ENCODE measurements at regions of chr18 and their contacts with region 1.

Region 1: GRCh38 chr18:50356036-50356945 is 18.6 kb upstream of the SKA1 start:
- DNase-seq: no peak
- H3K4me3 ChIP-seq: no peak overlapping the region
- H3K27ac ChIP-seq: no peak overlapping the region
- H3K4me1 ChIP-seq: peaks cover 10% of the 10 kb centered on the region
- H3K27me3 ChIP-seq: no peaks in the 10 kb centered on the region
- CTCF ChIP-seq: no peak

Region 2: GRCh38 chr18:49510393-49511115 is 845.7 kb before region 1 on chr18:
- CTCF ChIA-PET with region 1: interaction called, 4 read pairs
- POLR2A ChIA-PET with region 1: no interaction called
- intact Hi-C with region 1: loop called (anchors 5 kb)
- DNase-seq: peak in 1 of 2 experiments; percentile 42
- H3K4me3 ChIP-seq: no peak overlapping the region
- H3K27ac ChIP-seq: no peak overlapping the region
- H3K4me1 ChIP-seq: no peaks in the 10 kb centered on the region
- H3K27me3 ChIP-seq: no peaks in the 10 kb centered on the region
- CTCF ChIP-seq: peak; percentile 91

Region 3: GRCh38 chr18:50218432-50219197 is 137.7 kb before region 1 on chr18:
- CTCF ChIA-PET with region 1: interaction called, 3 read pairs
- POLR2A ChIA-PET with region 1: no interaction called
- intact Hi-C with region 1: loop called (anchors 5 kb)
- DNase-seq: no peak
- H3K4me3 ChIP-seq: no peak overlapping the region
- H3K27ac ChIP-seq: no peak overlapping the region
- H3K4me1 ChIP-seq: no peaks in the 10 kb centered on the region
- H3K27me3 ChIP-seq: 0 out of 2 replicates have a peak, but pooled peaks cover 11% of the 10 kb centered on the region
- CTCF ChIP-seq: peak; percentile 63

Region 4: DNA sequence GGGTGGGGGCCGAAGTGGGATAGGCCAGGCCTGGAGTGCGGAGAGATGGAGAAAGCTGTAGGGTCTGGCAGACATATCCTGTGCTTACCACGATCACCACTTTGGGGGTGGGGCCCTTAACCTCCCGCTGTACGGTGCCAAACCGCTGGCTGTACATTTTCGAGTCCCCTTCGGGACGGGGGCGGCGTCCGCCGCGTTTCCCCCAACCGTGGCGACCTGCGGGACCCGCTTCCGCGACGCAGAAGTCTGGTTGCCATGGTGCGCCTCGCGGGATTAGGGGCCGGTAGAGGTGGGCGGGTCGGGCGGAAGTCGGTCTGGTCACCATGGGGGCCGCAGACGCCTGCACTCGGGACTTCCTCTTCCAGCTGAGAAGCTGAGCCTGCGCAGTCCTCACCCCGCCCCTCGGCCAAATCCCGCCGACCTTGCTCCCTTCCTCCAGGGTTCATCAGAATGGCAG is 90.0 kb before region 1 on chr18 and contains the start of gene CFAP53:
- CTCF ChIA-PET with region 1: interaction called, 4 read pairs
- POLR2A ChIA-PET with region 1: no interaction called
- intact Hi-C with region 1: loop called (anchors 1 kb)
- DNase-seq: peak; percentile 82 to 83
- H3K4me3 ChIP-seq: peak within 1 kb of the TSS; percentile 83
- H3K27ac ChIP-seq: peak within 1 kb of the TSS; percentile 2; the same call in 1 of the 2 replicates
- H3K4me1 ChIP-seq: peaks cover 5% of the 10 kb centered on the region
- H3K27me3 ChIP-seq: no peaks in the 10 kb centered on the region
- CTCF ChIP-seq: no peak
- total RNA-seq, gene CFAP53: 1.9 and 2.1 TPM in 2 replicates

Region 5: GRCh38 chr18:50287441-50288347 is 68.6 kb before region 1 on chr18 and contains the start of gene CXXC1:
- CTCF ChIA-PET with region 1: no interaction called
- POLR2A ChIA-PET with region 1: interaction called, 5 read pairs
- intact Hi-C with region 1: loop called (anchors 1 kb)
- DNase-seq: peak; percentile 91 to 96
- H3K4me3 ChIP-seq: peak within 1 kb of the TSS; percentile 96
- H3K27ac ChIP-seq: peak within 1 kb of the TSS; percentile 72
- H3K4me1 ChIP-seq: 0 out of 2 replicates have a peak, but pooled peaks cover 12% of the 10 kb centered on the region
- H3K27me3 ChIP-seq: no peaks in the 10 kb centered on the region
- CTCF ChIP-seq: peak; percentile 48; the same call in 1 of the 2 replicates
- total RNA-seq, gene CXXC1: 48.2 and 54.7 TPM in 2 replicates

Measured in PC-9 (cell line).